Naive thymus-derived CD4-positive, alpha-beta T cell (primary cell): ENCODE measurements at regions of chr5 and their contacts with region 1.

Region 1: GRCh38 chr5:32027717-32028321 is 146.3 kb downstream of the GOLPH3 start:
- DNase-seq: no peak
- ATAC-seq: peak; percentile 54
- H3K4me3 ChIP-seq: no peak overlapping the region
- H3K4me3 Mint-ChIP-seq: peak overlapping the region in 1 of 10 donors; percentile 11
- H3K27ac ChIP-seq: no peak overlapping the region
- H3K27ac Mint-ChIP-seq: peak overlapping the region in 2 of 9 donors; percentile 41 to 54
- H3K4me1 ChIP-seq: peaks cover 0 to 4% of the 10 kb centered on the region in 2 donors
- H3K4me1 Mint-ChIP-seq: peaks cover 6 to 27% (median 17%) of the 10 kb centered on the region in 7 donors
- H3K27me3 ChIP-seq: no peaks in the 10 kb centered on the region
- H3K27me3 Mint-ChIP-seq: no peaks in the 10 kb centered on the region

Region 2: GRCh38 chr5:31854181-31855133 is 173.4 kb before region 1 on chr5:
- CTCF ChIA-PET with region 1: interaction called, 4 read pairs
- POLR2A ChIA-PET with region 1: no interaction called
- intact Hi-C with region 1: loop called in 1 of 2 experiments (anchors 1 kb)
- DNase-seq: peak in 4 of 9 donors; percentile 10 to 26 (median 24)
- ATAC-seq: peak; percentile 43
- H3K4me3 ChIP-seq: peak overlapping the region; percentile 63
- H3K4me3 Mint-ChIP-seq: peak overlapping the region; percentile 76 to 97 (median 88)
- H3K27ac ChIP-seq: peak overlapping the region; percentile 66
- H3K27ac Mint-ChIP-seq: peak overlapping the region in 8 of 9 donors; percentile 81 to 93 (median 85)
- H3K4me1 ChIP-seq: no peaks in the 10 kb centered on the region
- H3K4me1 Mint-ChIP-seq: peaks cover 9 to 44% (median 28%) of the 10 kb centered on the region in 7 donors
- H3K27me3 ChIP-seq: no peaks in the 10 kb centered on the region
- H3K27me3 Mint-ChIP-seq: peaks cover 0 to 45% (median 22%) of the 10 kb centered on the region in 5 donors